ENCODE measurements at regions of chr6 and their contacts with region 1.

Region 1: GRCh38 chr6:3751730-3752542 is 423 bp upstream of the PXDC1 start:
- DNase-seq: peak; percentile 78
- H3K4me3 ChIP-seq: peak overlapping the region; percentile 75 to 94 (median 93)
- H3K27ac ChIP-seq: peak overlapping the region; percentile 64
- H3K4me1 ChIP-seq: peaks cover 30% of the 10 kb centered on the region
- H3K27me3 ChIP-seq: no peaks in the 10 kb centered on the region
- CTCF ChIP-seq: no peak

Region 2: DNA sequence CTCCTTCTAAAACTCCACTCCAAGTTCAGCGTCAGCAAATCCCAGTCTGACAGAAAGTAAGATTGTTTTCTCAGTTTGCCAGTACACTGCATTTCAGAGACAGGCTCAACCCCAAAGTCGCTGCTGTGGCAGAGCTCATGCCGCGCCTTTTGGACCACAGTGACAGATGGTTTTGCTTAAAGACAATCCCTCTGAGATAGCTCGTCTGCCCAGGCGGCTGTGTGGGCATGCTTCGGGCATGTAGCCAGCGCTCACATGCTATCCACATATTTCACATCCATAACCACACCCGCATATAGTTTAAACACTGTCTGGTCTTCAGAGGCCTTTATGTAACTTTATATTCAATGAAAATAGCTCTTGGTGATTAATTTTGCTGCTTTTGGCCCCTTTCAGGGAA is 14.3 kb after region 1 on chr6:
- CTCF ChIA-PET with region 1: no interaction called
- dilution Hi-C with region 1: no loop called
- in situ Hi-C with region 1: no loop called
- intact Hi-C with region 1: loop called (anchors 2 kb)
- DNase-seq: peak; percentile 66
- H3K4me3 ChIP-seq: no peak overlapping the region
- H3K27ac ChIP-seq: peak overlapping the region; percentile 21
- H3K4me1 ChIP-seq: peaks cover 17% of the 10 kb centered on the region
- H3K27me3 ChIP-seq: no peaks in the 10 kb centered on the region
- CTCF ChIP-seq: no peak

Region 3: DNA sequence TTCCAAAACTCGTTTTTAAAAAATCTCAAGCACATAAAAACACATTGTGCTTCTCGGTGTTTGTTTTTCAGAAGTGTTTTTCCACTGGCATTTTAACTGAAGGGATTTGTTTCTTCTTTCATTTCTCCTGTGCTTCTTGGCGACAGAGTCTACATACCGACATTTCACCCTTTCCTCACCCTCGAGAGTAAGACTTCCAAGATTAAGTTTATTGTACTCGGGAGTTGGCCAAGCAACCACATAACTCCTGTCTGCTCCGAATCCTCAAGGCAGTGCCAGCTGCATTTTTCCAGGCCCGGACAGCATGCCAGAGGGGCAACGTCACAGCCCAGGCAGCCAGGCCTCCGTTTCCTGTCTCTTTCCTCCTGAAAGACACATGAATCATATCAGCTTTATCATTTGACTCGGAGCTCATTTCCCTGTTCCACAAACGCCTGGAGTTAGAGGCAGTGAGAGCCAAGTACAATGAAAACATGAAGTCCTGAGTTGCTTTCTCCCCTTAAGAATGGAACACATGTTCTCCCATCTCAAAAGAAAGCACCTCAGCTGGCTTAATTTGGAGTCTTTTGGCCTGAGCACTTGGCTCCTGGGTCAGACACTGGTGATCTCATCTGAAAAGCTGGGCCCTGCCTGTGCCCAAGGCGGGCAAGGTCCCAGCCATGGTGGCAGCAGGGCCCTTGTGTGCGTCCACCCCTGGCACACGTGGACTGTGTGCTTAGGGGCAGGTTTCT is 74.1 kb after region 1 on chr6:
- CTCF ChIA-PET with region 1: no interaction called
- dilution Hi-C with region 1: no loop called
- in situ Hi-C with region 1: loop called in 1 of 2 experiments (anchors 5 kb)
- intact Hi-C with region 1: loop called (anchors 1 kb)
- DNase-seq: peak; percentile 95
- H3K4me3 ChIP-seq: peak overlapping the region in 1 of 3 experiments; percentile 11
- H3K27ac ChIP-seq: peak overlapping the region; percentile 91
- H3K4me1 ChIP-seq: peaks cover 61% of the 10 kb centered on the region
- H3K27me3 ChIP-seq: no peaks in the 10 kb centered on the region
- CTCF ChIP-seq: no peak

Region 4: GRCh38 chr6:3887150-3887700 is 135.3 kb after region 1 on chr6:
- CTCF ChIA-PET with region 1: interaction called, 4 read pairs
- dilution Hi-C with region 1: no loop called
- in situ Hi-C with region 1: no loop called
- intact Hi-C with region 1: loop called (anchors 1 kb)
- DNase-seq: no peak
- H3K4me3 ChIP-seq: no peak overlapping the region
- H3K27ac ChIP-seq: no peak overlapping the region
- H3K4me1 ChIP-seq: peaks cover 11% of the 10 kb centered on the region
- H3K27me3 ChIP-seq: no peaks in the 10 kb centered on the region
- CTCF ChIP-seq: peak; percentile 38 to 61

Region 5: GRCh38 chr6:4008324-4009047 is 256.6 kb after region 1 on chr6:
- CTCF ChIA-PET with region 1: interaction called, 4 read pairs
- dilution Hi-C with region 1: no loop called
- in situ Hi-C with region 1: loop called in 1 of 2 experiments (anchors 5 kb)
- intact Hi-C with region 1: no loop called
- DNase-seq: peak; percentile 63
- H3K4me3 ChIP-seq: no peak overlapping the region
- H3K27ac ChIP-seq: peak overlapping the region; percentile 18
- H3K4me1 ChIP-seq: peaks cover 7% of the 10 kb centered on the region
- H3K27me3 ChIP-seq: no peaks in the 10 kb centered on the region
- CTCF ChIP-seq: peak; percentile 56 to 66

Measured in mammary epithelial cell (primary cell).